Endothelial cell of umbilical vein (primary cell): ENCODE measurements at regions of chr3 and their contacts with region 1.

Region 1: GRCh38 chr3:170221924-170222646 is at the start of gene PRKCI:
- DNase-seq: peak; percentile 97
- H3K4me3 ChIP-seq: peak within 1 kb of the TSS; percentile 27 to 98 (median 89)
- H3K27ac ChIP-seq: peak within 1 kb of the TSS; percentile 94
- H3K4me1 ChIP-seq: peaks cover 12% of the 10 kb centered on the region
- H3K27me3 ChIP-seq: no peaks in the 10 kb centered on the region
- CTCF ChIP-seq: no peak
- POLR2A ChIP-seq: peak; percentile 32
- total RNA-seq, gene PRKCI: 22.0 and 23.9 TPM in 2 replicates

Region 2: GRCh38 chr3:170180908-170181879 is 40.9 kb before region 1 on chr3 and contains the start of gene PHC3:
- CTCF ChIA-PET with region 1: no interaction called
- POLR2A ChIA-PET with region 1: no interaction called
- dilution Hi-C with region 1: no loop called
- intact Hi-C with region 1: loop called (anchors 1 kb)
- DNase-seq: peak; percentile 95
- H3K4me3 ChIP-seq: peak within 1 kb of the TSS; percentile 50 to 88 (median 77)
- H3K27ac ChIP-seq: peak within 1 kb of the TSS; percentile 44
- H3K4me1 ChIP-seq: peaks cover 11% of the 10 kb centered on the region
- H3K27me3 ChIP-seq: no peaks in the 10 kb centered on the region
- CTCF ChIP-seq: no peak
- POLR2A ChIP-seq: peak; percentile 90
- total RNA-seq, gene PHC3: 34.4 and 45.8 TPM in 2 replicates

Region 3: DNA sequence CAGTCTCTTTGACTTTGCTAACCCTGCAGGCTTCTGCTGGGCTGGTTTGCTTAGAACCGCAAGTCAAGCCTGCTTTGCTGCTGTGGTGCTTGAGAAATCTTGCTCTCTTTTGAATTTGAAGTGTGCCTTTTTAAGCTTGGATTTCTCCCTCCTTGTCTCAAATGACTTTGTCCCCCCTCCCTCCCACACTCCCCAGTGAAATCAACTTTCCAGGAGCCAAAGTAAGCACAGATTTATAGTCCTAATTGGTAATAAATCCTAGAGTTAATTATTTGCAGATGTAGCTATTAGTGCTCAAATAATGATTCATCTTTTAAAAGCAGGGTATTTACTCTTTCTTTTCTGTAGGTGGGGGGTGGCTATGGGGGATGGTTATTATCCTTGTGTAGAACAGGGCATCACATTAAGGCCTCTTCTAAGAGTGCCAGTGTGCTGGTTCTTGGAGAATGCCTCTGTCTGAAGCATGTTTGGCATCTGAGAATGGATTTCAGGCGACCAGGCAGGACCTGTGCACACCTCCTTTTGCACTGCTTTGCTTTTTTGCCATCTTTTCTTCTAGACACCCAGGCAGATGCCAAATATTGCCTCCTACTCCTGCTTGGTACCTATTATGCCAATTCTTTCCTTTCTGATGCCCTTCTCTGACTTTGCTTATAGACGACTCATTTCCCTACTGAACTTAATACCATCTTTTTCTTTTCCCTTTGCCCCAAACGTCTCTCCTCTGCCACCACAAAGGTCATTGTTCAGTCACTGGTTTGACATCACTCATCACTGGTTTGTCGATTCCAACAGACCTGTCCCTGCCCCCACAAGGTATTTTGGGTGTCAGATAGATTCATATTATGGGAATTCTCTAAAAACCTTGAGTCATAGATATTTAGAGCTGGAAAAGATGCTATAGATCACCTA is 247.3 kb after region 1 on chr3:
- CTCF ChIA-PET with region 1: no interaction called
- POLR2A ChIA-PET with region 1: no interaction called
- dilution Hi-C with region 1: no loop called
- intact Hi-C with region 1: no loop called
- DNase-seq: no peak
- H3K4me3 ChIP-seq: no peak overlapping the region
- H3K27ac ChIP-seq: no peak overlapping the region
- H3K4me1 ChIP-seq: no peaks in the 10 kb centered on the region
- H3K27me3 ChIP-seq: no peaks in the 10 kb centered on the region
- CTCF ChIP-seq: no peak
- POLR2A ChIP-seq: no peak